ENCODE measurements at regions of chr3 and their contacts with region 1.

Region 1: DNA sequence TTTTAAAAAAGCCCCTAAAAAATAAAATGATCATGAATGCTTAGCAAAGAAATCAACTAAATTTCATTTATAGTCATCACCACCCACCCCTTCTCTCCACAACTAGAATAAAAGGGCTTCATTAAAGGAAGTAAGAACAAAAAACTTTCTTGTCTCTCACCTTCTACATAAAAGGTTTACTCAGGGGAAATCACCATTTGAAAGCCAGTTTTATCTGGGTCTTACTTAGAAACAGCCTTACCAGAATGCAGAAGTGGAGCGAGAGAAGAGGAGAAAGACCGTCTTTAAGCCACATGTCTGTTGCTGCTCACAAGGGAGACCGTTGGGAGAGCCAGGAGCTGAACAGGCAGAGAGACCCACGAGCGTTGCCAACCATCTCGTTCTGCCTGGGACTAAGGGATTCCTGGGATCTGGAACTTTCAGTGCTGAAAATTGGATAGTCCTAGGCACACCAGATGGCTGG is 350.1 kb upstream of the PROK2 start:
- DNase-seq: peak; percentile 25
- H3K4me3 Mint-ChIP-seq: peak overlapping the region; percentile 59
- H3K27ac Mint-ChIP-seq: peak overlapping the region; percentile 85
- H3K4me1 Mint-ChIP-seq: peaks cover 47% of the 10 kb centered on the region
- H3K27me3 Mint-ChIP-seq: no peaks in the 10 kb centered on the region

Region 2: GRCh38 chr3:71978150-71978721 is 156.8 kb before region 1 on chr3:
- CTCF ChIA-PET with region 1: interaction called, 3 read pairs
- POLR2A ChIA-PET with region 1: interaction called, 4 read pairs
- intact Hi-C with region 1: loop called (anchors 1 kb)
- DNase-seq: peak; percentile 67
- H3K4me3 Mint-ChIP-seq: peak overlapping the region; percentile 38
- H3K27ac Mint-ChIP-seq: peak overlapping the region; percentile 88
- H3K4me1 Mint-ChIP-seq: peaks cover 44% of the 10 kb centered on the region
- H3K27me3 Mint-ChIP-seq: peaks cover 19% of the 10 kb centered on the region

Region 3: GRCh38 chr3:71998995-71999673 is 135.9 kb before region 1 on chr3:
- CTCF ChIA-PET with region 1: no interaction called
- POLR2A ChIA-PET with region 1: no interaction called
- intact Hi-C with region 1: loop called (anchors 1 kb)
- DNase-seq: peak; percentile 56
- H3K4me3 Mint-ChIP-seq: no peak overlapping the region
- H3K27ac Mint-ChIP-seq: peak overlapping the region; percentile 85
- H3K4me1 Mint-ChIP-seq: peaks cover 45% of the 10 kb centered on the region
- H3K27me3 Mint-ChIP-seq: peaks cover 12% of the 10 kb centered on the region

Region 4: DNA sequence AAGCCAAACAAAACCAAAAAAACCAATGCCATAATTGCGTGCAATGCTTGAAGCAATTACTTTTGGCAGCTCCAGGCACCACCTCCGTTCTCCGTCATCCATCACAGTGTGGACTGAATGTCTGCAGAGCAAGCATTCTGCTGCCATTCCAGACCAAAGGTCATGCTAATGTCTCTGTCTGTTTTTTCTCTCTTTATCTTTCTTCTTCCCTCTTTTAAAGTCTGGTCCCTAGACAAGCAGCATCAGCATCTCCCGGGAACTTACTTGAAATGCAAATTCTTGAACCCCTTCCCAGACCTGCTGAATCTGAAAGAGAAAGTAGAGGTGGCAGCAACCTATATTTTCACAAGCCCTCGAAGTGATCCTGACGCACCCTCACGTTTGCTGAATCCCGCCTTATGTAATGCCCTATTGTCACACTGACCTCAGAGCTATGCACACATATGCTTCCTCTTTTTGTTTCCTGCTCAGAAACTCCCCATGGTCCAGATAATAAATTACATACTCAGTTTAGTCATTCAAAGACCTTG is 52.8 kb before region 1 on chr3:
- CTCF ChIA-PET with region 1: no interaction called
- POLR2A ChIA-PET with region 1: no interaction called
- intact Hi-C with region 1: no loop called
- DNase-seq: no peak
- H3K4me3 Mint-ChIP-seq: no peak overlapping the region
- H3K27ac Mint-ChIP-seq: no peak overlapping the region
- H3K4me1 Mint-ChIP-seq: peaks cover 14% of the 10 kb centered on the region
- H3K27me3 Mint-ChIP-seq: peaks cover 2% of the 10 kb centered on the region

Region 5: DNA sequence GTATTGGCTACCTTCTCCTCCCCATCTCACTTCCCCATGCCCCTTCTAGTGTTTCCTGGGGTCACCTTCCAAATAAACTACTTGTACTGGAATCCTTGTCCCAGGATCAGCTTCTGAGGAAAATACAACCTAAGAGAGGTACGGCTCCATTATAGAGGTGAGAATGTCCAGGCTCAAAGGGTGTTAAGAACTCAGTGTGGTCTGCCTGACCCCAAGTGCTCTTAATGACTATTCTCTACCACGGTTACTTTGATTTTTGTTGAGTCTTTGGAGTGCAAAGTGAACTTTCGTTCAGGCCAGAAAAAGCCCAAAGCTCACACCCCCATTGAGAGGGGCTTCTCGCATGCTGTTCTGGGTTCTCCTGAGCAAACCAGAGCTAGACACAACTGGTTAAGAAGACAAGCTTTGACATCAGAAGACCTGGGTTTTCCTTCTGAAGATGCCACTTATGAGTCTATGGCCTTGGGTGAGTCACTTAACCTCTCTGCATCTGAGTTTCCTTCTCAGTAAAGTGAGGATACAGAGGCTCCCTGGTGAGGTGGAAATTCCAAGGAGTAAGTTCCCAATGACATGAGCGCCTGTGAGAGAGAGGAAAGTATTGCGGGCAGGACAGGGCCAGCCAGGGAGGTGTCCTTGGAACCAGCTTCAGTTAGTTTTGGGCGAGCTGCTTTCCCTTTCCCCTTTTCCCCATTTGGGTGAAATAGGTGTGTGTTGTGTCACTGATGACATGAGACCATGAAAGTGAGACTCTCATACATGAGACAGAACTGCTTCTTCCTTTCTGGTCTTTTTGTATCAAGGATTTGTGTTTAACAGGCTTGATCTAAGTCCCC is 125.0 kb after region 1 on chr3:
- CTCF ChIA-PET with region 1: no interaction called
- POLR2A ChIA-PET with region 1: no interaction called
- intact Hi-C with region 1: loop called (anchors 1 kb)
- DNase-seq: peak; percentile 53
- H3K4me3 Mint-ChIP-seq: no peak overlapping the region
- H3K27ac Mint-ChIP-seq: peak overlapping the region; percentile 61
- H3K4me1 Mint-ChIP-seq: peaks cover 38% of the 10 kb centered on the region
- H3K27me3 Mint-ChIP-seq: peaks cover 12% of the 10 kb centered on the region

Region 6: GRCh38 chr3:72418244-72418643 is 283.2 kb after region 1 on chr3:
- CTCF ChIA-PET with region 1: no interaction called
- POLR2A ChIA-PET with region 1: no interaction called
- intact Hi-C with region 1: loop called (anchors 1 kb)
- DNase-seq: no peak
- H3K4me3 Mint-ChIP-seq: no peak overlapping the region
- H3K27ac Mint-ChIP-seq: no peak overlapping the region
- H3K4me1 Mint-ChIP-seq: peaks cover 69% of the 10 kb centered on the region
- H3K27me3 Mint-ChIP-seq: no peaks in the 10 kb centered on the region

Region 7: GRCh38 chr3:72818092-72818773 is 683.2 kb after region 1 on chr3:
- CTCF ChIA-PET with region 1: no interaction called
- POLR2A ChIA-PET with region 1: no interaction called
- intact Hi-C with region 1: loop called (anchors 10 kb)
- DNase-seq: no peak
- H3K4me3 Mint-ChIP-seq: no peak overlapping the region
- H3K27ac Mint-ChIP-seq: no peak overlapping the region
- H3K4me1 Mint-ChIP-seq: peaks cover 22% of the 10 kb centered on the region
- H3K27me3 Mint-ChIP-seq: no peaks in the 10 kb centered on the region

Measured in activated CD4-positive, alpha-beta memory T cell treated with anti-CD3 and anti-CD28 coated beads for 36 hours (primary cell).